ENCODE measurements at regions of chr12 and their contacts with region 1.

Region 1: GRCh38 chr12:14629832-14630710 is 62.4 kb upstream of the PLBD1 start:
- DNase-seq: peak; percentile 42 to 46
- ATAC-seq: peak; percentile 93 to 97
- H3K4me3 ChIP-seq: no peak overlapping the region
- H3K27ac ChIP-seq: no peak overlapping the region
- H3K4me1 ChIP-seq: peaks cover 0 to 3% of the 10 kb centered on the region in 2 donors
- H3K27me3 ChIP-seq: no peaks in the 10 kb centered on the region
- CTCF ChIP-seq: peak; percentile 81 to 95 (median 87)
- POLR2A ChIP-seq: no peak

Region 2: GRCh38 chr12:14664510-14664909 is 34.4 kb after region 1 on chr12:
- in situ Hi-C with region 1: no loop called
- intact Hi-C with region 1: loop called (anchors 2 kb)
- DNase-seq: no peak
- ATAC-seq: no peak
- H3K4me3 ChIP-seq: no peak overlapping the region
- H3K27ac ChIP-seq: no peak overlapping the region
- H3K4me1 ChIP-seq: no peaks in the 10 kb centered on the region
- H3K27me3 ChIP-seq: no peaks in the 10 kb centered on the region
- CTCF ChIP-seq: peak; percentile 35 to 63 (median 54)
- POLR2A ChIP-seq: no peak

Region 3: DNA sequence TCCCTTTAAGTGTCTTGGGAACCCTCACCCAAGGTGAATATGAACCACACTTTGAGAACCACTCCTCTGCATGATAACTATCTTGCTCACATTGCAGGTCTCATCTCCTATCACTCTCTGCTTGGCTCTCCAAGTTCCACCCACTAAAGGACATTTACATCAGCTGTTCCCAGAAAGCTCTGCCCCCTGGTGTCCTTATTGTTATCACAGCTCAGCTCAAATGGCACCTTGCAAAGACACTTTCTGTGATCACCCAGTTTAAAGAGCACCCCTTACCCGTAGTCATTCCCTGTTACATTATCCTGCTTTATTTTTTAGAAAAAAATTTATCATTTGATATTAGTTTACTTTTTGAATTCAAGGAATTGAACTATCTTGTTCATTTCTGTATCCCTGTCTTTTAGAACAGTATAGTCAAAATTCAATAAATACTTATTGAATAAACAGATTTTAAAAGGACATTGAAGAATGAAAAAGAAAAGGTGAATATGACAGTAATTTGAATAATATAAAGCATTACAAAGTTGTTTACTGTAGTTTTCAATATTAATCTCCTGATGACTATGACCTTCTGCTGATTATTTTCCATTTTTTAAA is 86.9 kb after region 1 on chr12:
- in situ Hi-C with region 1: no loop called
- intact Hi-C with region 1: loop called (anchors 5 kb)
- DNase-seq: no peak
- ATAC-seq: no peak
- H3K4me3 ChIP-seq: no peak overlapping the region
- H3K27ac ChIP-seq: no peak overlapping the region
- H3K4me1 ChIP-seq: no peaks in the 10 kb centered on the region
- H3K27me3 ChIP-seq: no peaks in the 10 kb centered on the region
- CTCF ChIP-seq: peak in 2 of 5 experiments; percentile 24 to 26
- POLR2A ChIP-seq: no peak

Region 4: GRCh38 chr12:14995583-14996425 is 365.7 kb after region 1 on chr12:
- in situ Hi-C with region 1: loop called in 3 of 4 experiments (anchors 25 kb)
- intact Hi-C with region 1: loop called (anchors 1 kb)
- DNase-seq: no peak
- ATAC-seq: no peak
- H3K4me3 ChIP-seq: no peak overlapping the region
- H3K27ac ChIP-seq: no peak overlapping the region
- H3K4me1 ChIP-seq: peaks cover 3 to 8% of the 10 kb centered on the region in 2 donors
- H3K27me3 ChIP-seq: no peaks in the 10 kb centered on the region
- CTCF ChIP-seq: peak; percentile 32 to 73 (median 57)
- POLR2A ChIP-seq: no peak

Measured in gastrocnemius medialis (tissue), 4 donors.